ENCODE measurements at regions of chr19 and their contacts with region 1.

Region 1: DNA sequence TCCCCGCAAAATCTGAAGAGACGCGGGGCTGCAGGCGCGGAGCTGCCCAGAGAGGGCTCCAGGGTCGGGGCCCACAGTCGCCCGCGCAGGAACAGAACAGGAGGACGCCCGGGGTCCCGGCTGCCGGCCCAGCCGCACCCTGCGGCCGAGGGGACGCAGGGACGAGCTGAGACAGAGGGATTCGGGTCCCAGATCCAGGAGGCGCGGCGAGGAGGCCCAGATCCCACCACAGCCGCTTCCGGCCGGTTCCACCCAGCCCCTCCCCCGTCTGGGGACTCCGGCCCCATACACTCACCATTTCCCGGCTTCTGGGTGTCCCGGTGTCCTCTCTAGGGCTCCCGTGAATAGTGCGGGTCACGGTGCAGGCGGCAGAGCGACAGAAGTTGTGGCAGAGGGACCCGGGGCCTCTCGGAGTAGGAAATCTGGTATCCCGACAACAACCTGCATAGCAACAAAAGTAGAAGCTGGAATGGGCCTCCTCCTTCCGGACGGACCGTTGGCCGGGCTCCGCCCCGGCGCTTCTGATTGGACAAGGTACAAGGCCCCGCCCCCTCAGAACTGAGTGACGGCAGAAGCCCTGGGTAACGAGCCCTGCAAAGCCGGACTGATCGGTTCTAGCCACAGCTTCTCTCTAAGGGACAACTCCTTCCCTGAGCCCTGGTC is at the start of gene ZNF20:
- DNase-seq: peak; percentile 87 to 98
- H3K4me3 ChIP-seq: peak within 1 kb of the TSS; percentile 76 to 83
- H3K27ac ChIP-seq: peak within 1 kb of the TSS; percentile 78 to 82
- H3K4me1 ChIP-seq: peaks cover 0 to 17% of the 10 kb centered on the region in 2 donors
- H3K27me3 ChIP-seq: no peaks in the 10 kb centered on the region
- CTCF ChIP-seq: peak in 1 of 3 experiments; percentile 2
- total RNA-seq, gene ZNF20: 0.96 TPM

Region 2: GRCh38 chr19:11881151-11881800 is 258.7 kb before region 1 on chr19:
- intact Hi-C with region 1: loop called (anchors 2 kb)
- DNase-seq: no peak
- H3K4me3 ChIP-seq: no peak overlapping the region
- H3K27ac ChIP-seq: no peak overlapping the region
- H3K4me1 ChIP-seq: no peaks in the 10 kb centered on the region
- H3K27me3 ChIP-seq: no peaks in the 10 kb centered on the region
- CTCF ChIP-seq: peak; percentile 37 to 63 (median 47)

Region 3: GRCh38 chr19:11924886-11925650 is 214.9 kb before region 1 on chr19 and contains the start of gene ZNF700:
- intact Hi-C with region 1: loop called (anchors 1 kb)
- DNase-seq: peak; percentile 77 to 97
- H3K4me3 ChIP-seq: peak within 1 kb of the TSS; percentile 84 to 88
- H3K27ac ChIP-seq: peak within 1 kb of the TSS; percentile 92 to 93
- H3K4me1 ChIP-seq: peaks cover 3 to 10% of the 10 kb centered on the region in 2 donors
- H3K27me3 ChIP-seq: no peaks in the 10 kb centered on the region
- CTCF ChIP-seq: no peak
- total RNA-seq, gene ZNF700: 4.4 TPM

Region 4: GRCh38 chr19:11987405-11988281 is 152.4 kb before region 1 on chr19:
- intact Hi-C with region 1: loop called (anchors 1 kb)
- DNase-seq: peak; percentile 90 to 98
- H3K4me3 ChIP-seq: peak overlapping the region; percentile 80 to 92
- H3K27ac ChIP-seq: peak overlapping the region; percentile 83 to 88
- H3K4me1 ChIP-seq: no peaks in the 10 kb centered on the region
- H3K27me3 ChIP-seq: no peaks in the 10 kb centered on the region
- CTCF ChIP-seq: no peak

Region 5: GRCh38 chr19:12064590-12065538 is 75.2 kb before region 1 on chr19 and contains the start of gene ZNF844:
- intact Hi-C with region 1: loop called (anchors 1 kb)
- DNase-seq: peak; percentile 95 to 98
- H3K4me3 ChIP-seq: peak within 1 kb of the TSS; percentile 84 to 85
- H3K27ac ChIP-seq: peak within 1 kb of the TSS; percentile 87 to 93
- H3K4me1 ChIP-seq: peaks cover 3 to 7% of the 10 kb centered on the region in 2 donors
- H3K27me3 ChIP-seq: no peaks in the 10 kb centered on the region
- CTCF ChIP-seq: no peak
- total RNA-seq, gene ZNF844: 8.0 TPM

Region 6: DNA sequence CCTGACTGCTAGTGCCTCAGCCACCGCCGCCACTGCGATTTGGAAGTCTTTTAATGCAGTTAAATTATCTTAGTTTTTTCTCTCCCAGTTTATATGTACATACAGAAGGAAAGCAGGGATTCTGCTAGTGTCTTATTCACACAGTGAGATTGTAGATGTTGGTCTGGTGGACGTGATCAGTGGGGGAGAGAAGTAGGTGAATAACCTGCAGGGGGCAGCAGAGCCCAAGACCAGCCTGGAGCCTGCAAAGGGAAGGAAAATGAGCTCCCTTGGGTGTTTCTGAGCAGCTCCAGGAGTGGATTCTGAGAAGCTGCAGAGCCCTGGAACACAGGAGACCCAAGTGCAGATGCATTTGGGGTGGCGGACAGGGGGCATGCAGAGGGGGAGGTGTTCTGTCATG is 49.2 kb before region 1 on chr19:
- intact Hi-C with region 1: loop called (anchors 1 kb)
- DNase-seq: peak in 1 of 2 donors; percentile 76
- H3K4me3 ChIP-seq: no peak overlapping the region
- H3K27ac ChIP-seq: no peak overlapping the region
- H3K4me1 ChIP-seq: peaks cover 0 to 2% of the 10 kb centered on the region in 2 donors
- H3K27me3 ChIP-seq: no peaks in the 10 kb centered on the region
- CTCF ChIP-seq: peak; percentile 27 to 63 (median 41)

Measured in ascending aorta (tissue), 2 donors.